WTC11 (cell line): ENCODE measurements at regions of chr4 and their contacts with region 1.

Region 1: DNA sequence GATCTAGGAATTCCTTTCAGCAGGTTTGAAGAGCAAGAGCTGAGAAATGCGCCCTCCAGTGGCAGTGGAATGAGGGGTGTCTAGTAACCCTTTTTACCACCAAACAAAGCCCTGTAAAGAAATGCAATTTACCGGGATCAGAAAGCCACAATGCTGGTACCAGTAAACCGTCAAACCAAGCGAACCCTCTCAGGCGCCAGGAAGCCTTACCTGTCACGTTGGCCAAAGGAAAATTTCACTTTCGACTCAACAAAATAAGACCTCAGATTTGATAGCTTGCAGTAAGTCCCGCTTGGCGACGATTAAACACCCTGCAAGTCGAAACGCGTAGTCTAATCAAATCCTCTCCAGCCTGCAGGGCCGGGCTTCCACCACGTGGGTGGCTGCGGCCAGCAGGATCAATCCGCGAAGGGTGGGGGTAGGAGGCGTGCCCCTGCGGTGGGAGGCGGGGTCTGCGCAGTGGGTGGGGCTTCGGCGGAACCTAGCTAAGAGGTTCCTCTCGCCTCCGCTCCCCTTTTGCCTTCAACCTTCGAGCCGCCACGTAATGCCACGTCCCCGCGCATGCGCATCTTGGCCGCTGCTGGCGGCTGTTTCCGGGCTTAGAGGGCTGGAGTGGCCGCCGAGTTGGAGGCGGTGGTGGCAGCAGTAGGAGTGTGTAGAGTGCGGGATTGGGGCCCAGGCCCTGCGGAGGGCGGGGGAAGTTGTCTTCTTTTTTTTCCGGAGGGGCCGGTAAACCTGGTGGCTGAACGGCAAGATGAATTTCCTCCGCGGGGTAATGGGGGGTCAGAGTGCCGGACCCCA is at the start of gene USO1:
- DNase-seq: peak; percentile 100
- ATAC-seq: peak; percentile 92
- H3K4me3 Mint-ChIP-seq: peak within 1 kb of the TSS; percentile 99
- H3K27ac Mint-ChIP-seq: peak within 1 kb of the TSS; percentile 99
- H3K4me1 Mint-ChIP-seq: peaks cover 44% of the 10 kb centered on the region
- H3K27me3 Mint-ChIP-seq: no peaks in the 10 kb centered on the region
- CTCF ChIP-seq: peak; percentile 54; the same call in 1 of the 2 replicates
- total RNA-seq, gene USO1: 134 to 162 TPM (median 141 TPM) in 3 replicates

Region 2: GRCh38 chr4:75630174-75630936 is 93.9 kb before region 1 on chr4 and contains the start of gene CDKL2:
- CTCF ChIA-PET with region 1: interaction called, 5 read pairs
- POLR2A ChIA-PET with region 1: interaction called, 11 read pairs
- DNase-seq: peak; percentile 93
- ATAC-seq: peak; percentile 98
- H3K4me3 Mint-ChIP-seq: peak within 1 kb of the TSS; percentile 84
- H3K27ac Mint-ChIP-seq: peak within 1 kb of the TSS; percentile 68
- H3K4me1 Mint-ChIP-seq: peaks cover 7% of the 10 kb centered on the region
- H3K27me3 Mint-ChIP-seq: peaks cover 30% of the 10 kb centered on the region
- CTCF ChIP-seq: no peak
- total RNA-seq, gene CDKL2: 1.4 to 1.7 TPM (median 1.7 TPM) in 3 replicates

Region 3: DNA sequence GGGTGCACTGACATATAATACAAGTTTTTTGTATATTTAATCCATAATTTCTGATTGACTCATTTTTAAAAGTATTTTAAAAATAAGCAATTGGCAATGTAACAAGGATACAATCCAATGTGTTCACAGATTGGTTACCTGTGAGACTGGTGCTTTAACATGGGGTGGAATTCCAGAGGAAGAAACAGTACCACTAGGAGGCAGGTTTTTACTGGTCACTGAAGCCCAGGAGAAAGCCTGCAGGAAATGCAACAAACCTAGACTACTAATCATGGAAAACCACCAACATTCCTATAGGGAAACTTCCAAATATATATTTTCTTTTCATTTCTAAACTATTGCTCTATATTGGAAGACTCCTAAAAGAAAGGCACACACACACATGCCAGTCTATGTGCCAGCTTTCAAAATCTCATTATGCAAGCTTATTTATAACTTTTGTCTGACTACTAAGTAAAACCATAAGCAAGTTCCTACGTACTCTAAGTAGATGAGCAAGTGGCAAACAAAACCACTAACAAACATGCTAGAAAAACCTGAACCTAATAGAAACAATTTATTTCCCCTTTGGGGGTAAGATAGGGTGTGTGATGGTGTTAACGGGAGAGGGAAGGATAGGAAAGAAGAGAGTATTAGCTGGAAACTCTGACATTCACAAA is 70.3 kb before region 1 on chr4:
- CTCF ChIA-PET with region 1: interaction called, 20 read pairs
- POLR2A ChIA-PET with region 1: interaction called, 11 read pairs
- DNase-seq: no peak
- ATAC-seq: peak; percentile 90
- H3K4me3 Mint-ChIP-seq: no peak overlapping the region
- H3K27ac Mint-ChIP-seq: peak overlapping the region; percentile 92
- H3K4me1 Mint-ChIP-seq: peaks cover 8% of the 10 kb centered on the region; the same call in 1 of the 2 replicates
- H3K27me3 Mint-ChIP-seq: no peaks in the 10 kb centered on the region
- CTCF ChIP-seq: no peak

Region 4: DNA sequence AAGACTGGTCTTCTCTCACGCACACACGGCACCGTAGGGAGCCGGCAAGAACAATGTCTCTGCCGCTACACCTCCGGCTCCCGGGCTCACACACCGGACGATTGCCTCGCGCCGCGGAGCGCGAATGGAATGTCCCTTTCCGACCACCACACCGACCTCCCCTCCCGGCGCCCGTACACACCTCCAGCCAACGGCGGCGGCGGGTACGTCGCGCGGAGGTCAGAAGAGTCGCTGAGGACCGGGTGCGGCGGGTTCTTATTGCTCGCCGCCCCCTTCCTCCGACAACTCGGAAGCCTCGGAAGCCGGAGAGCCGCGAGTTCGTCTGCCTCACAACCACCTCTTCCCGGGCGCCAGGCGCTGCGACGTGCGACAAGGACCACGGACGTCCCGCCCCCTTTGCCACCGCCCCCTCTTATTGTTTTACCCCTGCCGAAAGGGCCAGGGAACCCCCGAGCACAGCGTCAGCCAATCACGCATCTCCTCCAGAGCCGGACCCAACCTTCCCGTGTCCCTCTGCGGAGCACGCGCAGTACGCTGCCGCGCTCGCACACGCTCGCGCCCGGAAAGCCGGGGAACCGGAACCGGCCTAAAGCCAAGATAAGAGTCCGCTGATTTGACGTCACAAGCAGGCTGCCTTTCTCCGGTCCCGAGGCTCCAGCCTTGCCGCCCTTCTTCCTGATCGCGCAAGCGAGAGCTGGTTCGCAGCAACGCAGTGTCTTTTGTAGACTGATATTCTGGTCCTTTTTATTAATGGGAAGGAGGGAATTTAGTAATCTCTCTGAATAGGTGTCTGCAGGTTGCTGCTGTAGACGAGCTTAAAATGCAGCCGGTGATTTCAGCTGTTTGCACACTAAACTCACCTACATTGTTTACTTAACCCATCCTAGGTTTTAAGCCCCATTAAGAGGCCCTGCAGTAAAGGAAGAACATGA is 51.0 kb before region 1 on chr4 and contains the start of gene G3BP2:
- CTCF ChIA-PET with region 1: interaction called, 14 read pairs
- POLR2A ChIA-PET with region 1: interaction called, 28 read pairs
- DNase-seq: peak; percentile 97
- ATAC-seq: peak; percentile 96
- H3K4me3 Mint-ChIP-seq: peak within 1 kb of the TSS; percentile 96
- H3K27ac Mint-ChIP-seq: peak within 1 kb of the TSS; percentile 100
- H3K4me1 Mint-ChIP-seq: peaks cover 63% of the 10 kb centered on the region
- H3K27me3 Mint-ChIP-seq: no peaks in the 10 kb centered on the region
- CTCF ChIP-seq: no peak
- total RNA-seq, gene G3BP2: 279 to 294 TPM (median 284 TPM) in 3 replicates

Region 5: DNA sequence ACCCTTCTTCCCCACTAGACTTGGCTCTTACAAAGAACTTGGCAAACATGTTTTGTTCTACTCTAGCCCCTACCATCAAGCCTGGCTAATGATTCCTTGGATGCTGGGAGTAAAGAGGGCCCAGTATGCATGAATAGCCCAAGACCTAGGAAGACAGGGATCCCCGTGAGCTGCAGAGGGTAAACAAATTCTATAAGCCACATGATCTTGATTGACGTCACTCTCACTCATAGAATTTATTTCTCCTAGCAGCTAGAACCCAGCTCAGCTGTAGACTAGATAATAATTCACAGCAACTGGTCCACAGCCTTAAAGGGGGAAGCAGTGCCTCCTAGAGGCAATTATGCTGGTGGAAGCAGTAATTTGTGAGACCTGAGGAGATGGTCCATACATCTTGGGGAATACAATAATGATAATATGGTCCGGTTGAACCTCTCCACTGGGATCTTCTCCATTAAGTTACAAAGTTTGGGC is 16.0 kb before region 1 on chr4:
- CTCF ChIA-PET with region 1: interaction called, 29 read pairs
- POLR2A ChIA-PET with region 1: interaction called, 18 read pairs
- DNase-seq: peak; percentile 23
- ATAC-seq: peak; percentile 9
- H3K4me3 Mint-ChIP-seq: no peak overlapping the region
- H3K27ac Mint-ChIP-seq: peak overlapping the region; percentile 92
- H3K4me1 Mint-ChIP-seq: peaks cover 42% of the 10 kb centered on the region
- H3K27me3 Mint-ChIP-seq: no peaks in the 10 kb centered on the region
- CTCF ChIP-seq: 0 out of 2 replicates have a peak, but pooled peaks have one; percentile 17

Region 6: DNA sequence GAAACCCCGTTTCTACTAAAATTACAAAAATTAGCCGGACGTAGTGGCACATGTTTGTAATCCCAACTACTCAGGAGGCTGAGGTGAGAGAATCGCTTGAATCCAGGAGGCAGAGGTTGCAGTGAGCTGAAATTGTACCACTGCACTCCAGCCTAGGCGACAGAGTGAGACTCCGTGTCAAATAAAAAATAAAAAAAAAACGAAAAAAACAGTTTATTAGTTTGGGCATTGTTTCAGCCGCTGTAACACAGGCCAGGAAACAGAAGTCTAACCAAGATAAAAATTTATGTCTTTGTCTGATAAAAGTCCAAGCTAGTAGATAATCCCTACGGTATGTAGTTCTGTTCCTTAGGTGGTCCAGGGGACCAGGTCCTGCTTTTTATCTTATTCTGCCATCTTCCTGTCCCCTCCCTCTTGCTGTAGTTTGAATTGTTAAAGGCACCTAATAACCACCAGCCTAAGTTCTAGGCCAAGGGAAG is 21.5 kb after region 1 on chr4:
- CTCF ChIA-PET with region 1: interaction called, 16 read pairs
- POLR2A ChIA-PET with region 1: interaction called, 3 read pairs
- DNase-seq: no peak
- ATAC-seq: no peak
- H3K4me3 Mint-ChIP-seq: no peak overlapping the region
- H3K27ac Mint-ChIP-seq: 0 out of 2 replicates have a peak overlapping the region, but pooled peaks have one; percentile 60
- H3K4me1 Mint-ChIP-seq: no peaks in the 10 kb centered on the region
- H3K27me3 Mint-ChIP-seq: no peaks in the 10 kb centered on the region
- CTCF ChIP-seq: no peak

Region 7: GRCh38 chr4:75786526-75786925 is 62.3 kb after region 1 on chr4:
- CTCF ChIA-PET with region 1: no interaction called
- POLR2A ChIA-PET with region 1: no interaction called
- DNase-seq: no peak
- ATAC-seq: no peak
- H3K4me3 Mint-ChIP-seq: no peak overlapping the region
- H3K27ac Mint-ChIP-seq: no peak overlapping the region
- H3K4me1 Mint-ChIP-seq: no peaks in the 10 kb centered on the region
- H3K27me3 Mint-ChIP-seq: no peaks in the 10 kb centered on the region
- CTCF ChIP-seq: no peak

Region 8: DNA sequence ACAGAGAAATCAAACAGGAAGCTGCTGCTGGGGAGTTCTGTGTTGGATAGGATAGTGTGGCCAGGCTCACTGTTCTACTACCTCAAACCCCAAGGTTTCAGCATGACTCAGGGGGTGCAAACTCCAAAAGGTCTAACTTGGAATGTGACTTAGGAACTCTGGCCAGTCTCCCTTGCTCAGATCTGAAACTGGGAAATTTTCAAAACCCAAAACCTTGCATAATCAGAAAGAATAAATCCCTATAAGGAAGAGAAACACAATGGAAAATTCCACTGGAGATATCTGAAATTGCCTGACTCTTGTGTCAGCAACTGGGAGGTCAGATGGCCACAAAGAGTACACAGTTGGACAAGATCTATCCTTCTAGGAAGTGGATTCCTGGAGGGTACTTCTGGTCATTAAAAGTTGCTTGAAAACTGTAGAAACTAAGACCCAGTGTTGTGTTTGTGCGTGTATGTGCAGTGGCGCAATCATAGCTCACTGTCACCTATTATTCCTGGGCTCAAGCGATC is 119.9 kb after region 1 on chr4:
- CTCF ChIA-PET with region 1: interaction called, 19 read pairs
- POLR2A ChIA-PET with region 1: interaction called, 6 read pairs
- DNase-seq: no peak
- ATAC-seq: no peak
- H3K4me3 Mint-ChIP-seq: no peak overlapping the region
- H3K27ac Mint-ChIP-seq: no peak overlapping the region
- H3K4me1 Mint-ChIP-seq: peaks cover 24% of the 10 kb centered on the region
- H3K27me3 Mint-ChIP-seq: no peaks in the 10 kb centered on the region
- CTCF ChIP-seq: no peak

Region 9: GRCh38 chr4:75908555-75908954 is 184.3 kb after region 1 on chr4:
- CTCF ChIA-PET with region 1: no interaction called
- POLR2A ChIA-PET with region 1: no interaction called
- DNase-seq: no peak
- ATAC-seq: no peak
- H3K4me3 Mint-ChIP-seq: no peak overlapping the region
- H3K27ac Mint-ChIP-seq: no peak overlapping the region
- H3K4me1 Mint-ChIP-seq: peaks cover 23% of the 10 kb centered on the region
- H3K27me3 Mint-ChIP-seq: no peaks in the 10 kb centered on the region
- CTCF ChIP-seq: no peak